IMR-90 (cell line): ENCODE measurements at regions of chr9 and their contacts with region 1.

Region 1: DNA sequence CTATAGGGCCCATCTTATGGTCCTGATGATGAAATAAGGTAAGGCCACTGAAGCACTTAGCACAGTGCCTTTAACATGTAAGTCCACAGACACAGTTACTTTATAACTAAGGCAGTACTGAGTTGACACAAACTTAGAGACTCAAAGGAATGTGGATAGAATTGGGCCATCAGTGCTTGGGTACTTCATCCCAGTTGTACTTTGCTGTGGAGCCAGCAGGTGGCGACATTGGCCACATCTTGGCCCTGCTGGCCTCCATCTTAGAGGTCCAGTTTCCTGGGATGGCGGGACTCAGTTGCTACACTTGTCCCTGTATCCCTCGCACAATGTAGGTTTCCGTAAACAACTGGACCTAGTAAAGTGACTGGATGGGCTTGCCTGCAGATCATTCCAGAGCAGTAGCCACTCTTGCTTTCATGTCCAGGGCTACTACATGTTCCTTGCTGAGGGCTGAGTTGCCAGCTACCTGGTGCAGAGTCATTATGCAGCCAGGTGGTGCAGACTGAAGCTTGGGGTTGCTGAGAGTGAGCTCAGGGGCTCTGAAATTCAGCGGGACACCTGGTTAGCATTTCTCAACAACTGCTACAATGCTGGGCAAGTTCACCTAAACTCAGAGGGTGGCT is 10.6 kb downstream of the MTAP start:
- DNase-seq: peak; percentile 74
- ATAC-seq: peak; percentile 87
- H3K4me3 ChIP-seq: no peak overlapping the region
- H3K27ac ChIP-seq: no peak overlapping the region
- H3K4me1 ChIP-seq: 0 out of 2 replicates have a peak, but pooled peaks cover 4% of the 10 kb centered on the region
- H3K27me3 ChIP-seq: no peaks in the 10 kb centered on the region
- CTCF ChIP-seq: peak; percentile 92
- POLR2A ChIP-seq: 0 out of 2 replicates have a peak, but pooled peaks have one; percentile 20
- RAD21 ChIP-seq: peak; percentile 96

Region 2: DNA sequence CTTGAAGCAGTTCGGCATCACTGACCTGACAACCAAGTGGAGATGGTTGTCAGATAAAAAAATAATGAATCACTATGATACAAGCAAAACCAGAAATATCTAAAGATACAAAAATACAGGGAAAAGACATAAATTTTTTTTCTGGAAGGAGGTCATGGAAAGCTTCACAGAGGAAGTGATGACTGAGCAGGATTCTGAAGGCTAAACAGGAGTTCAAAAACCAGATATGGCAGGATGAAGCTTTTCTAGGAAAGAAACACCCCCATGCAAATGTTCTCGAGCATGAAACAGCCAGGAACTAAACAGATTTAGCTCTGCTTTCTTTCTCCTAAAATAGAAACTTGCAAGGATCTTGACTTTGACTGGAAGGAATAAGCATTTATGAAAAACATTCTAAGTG is 270.3 kb before region 1 on chr9:
- CTCF ChIA-PET with region 1: no interaction called
- POLR2A ChIA-PET with region 1: no interaction called
- dilution Hi-C with region 1: no loop called
- in situ Hi-C with region 1: no loop called
- intact Hi-C with region 1: no loop called
- DNase-seq: no peak
- ATAC-seq: no peak
- H3K4me3 ChIP-seq: no peak overlapping the region
- H3K27ac ChIP-seq: no peak overlapping the region
- H3K4me1 ChIP-seq: peaks cover 4% of the 10 kb centered on the region; the same call in 1 of the 2 replicates
- H3K27me3 ChIP-seq: no peaks in the 10 kb centered on the region
- CTCF ChIP-seq: no peak
- POLR2A ChIP-seq: no peak
- RAD21 ChIP-seq: no peak

Region 3: DNA sequence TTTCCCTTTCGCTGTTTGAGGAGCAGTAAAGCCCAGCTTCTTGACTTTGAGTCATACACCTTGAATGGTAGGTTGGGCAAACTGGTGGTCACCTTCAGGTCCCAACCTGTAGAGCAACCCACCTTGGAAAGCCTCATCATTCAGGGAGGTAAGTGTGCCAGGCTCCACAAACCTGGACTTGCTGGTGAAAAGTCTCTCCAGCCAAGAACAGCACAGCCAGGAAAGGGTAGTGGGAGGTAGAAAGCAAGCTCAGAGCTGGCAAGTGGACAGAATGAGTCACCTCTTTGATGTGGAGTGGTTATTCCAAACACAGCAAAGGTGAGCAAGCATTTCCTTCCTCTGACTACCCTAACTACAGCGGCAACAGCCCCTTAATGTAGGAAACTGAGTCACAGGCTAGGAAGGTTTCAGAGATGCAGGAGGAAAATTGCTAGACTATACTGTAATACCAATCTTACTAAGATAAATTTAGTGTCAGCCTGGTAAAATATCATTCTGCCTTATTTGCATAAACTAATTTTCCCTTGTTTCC is 128.2 kb before region 1 on chr9:
- CTCF ChIA-PET with region 1: no interaction called
- POLR2A ChIA-PET with region 1: no interaction called
- dilution Hi-C with region 1: no loop called
- in situ Hi-C with region 1: no loop called
- intact Hi-C with region 1: no loop called
- DNase-seq: peak; percentile 87
- ATAC-seq: 0 out of 2 replicates have a peak, but pooled peaks have one; percentile 6
- H3K4me3 ChIP-seq: no peak overlapping the region
- H3K27ac ChIP-seq: no peak overlapping the region; the same call in 1 of the 2 replicates
- H3K4me1 ChIP-seq: peaks cover 33% of the 10 kb centered on the region
- H3K27me3 ChIP-seq: no peaks in the 10 kb centered on the region
- CTCF ChIP-seq: no peak
- POLR2A ChIP-seq: no peak
- RAD21 ChIP-seq: no peak

Region 4: GRCh38 chr9:21873540-21874221 is 60.6 kb after region 1 on chr9:
- CTCF ChIA-PET with region 1: no interaction called
- POLR2A ChIA-PET with region 1: no interaction called
- dilution Hi-C with region 1: no loop called
- in situ Hi-C with region 1: no loop called
- intact Hi-C with region 1: no loop called
- DNase-seq: peak; percentile 49
- ATAC-seq: no peak
- H3K4me3 ChIP-seq: no peak overlapping the region
- H3K27ac ChIP-seq: no peak overlapping the region
- H3K4me1 ChIP-seq: no peaks in the 10 kb centered on the region
- H3K27me3 ChIP-seq: no peaks in the 10 kb centered on the region
- CTCF ChIP-seq: no peak
- POLR2A ChIP-seq: no peak
- RAD21 ChIP-seq: no peak

Region 5: GRCh38 chr9:21995177-21996086 is 182.4 kb after region 1 on chr9:
- CTCF ChIA-PET with region 1: interaction called, 3 read pairs
- POLR2A ChIA-PET with region 1: no interaction called
- dilution Hi-C with region 1: no loop called
- in situ Hi-C with region 1: no loop called
- intact Hi-C with region 1: loop called (anchors 1 kb)
- DNase-seq: peak; percentile 69
- ATAC-seq: peak; percentile 71
- H3K4me3 ChIP-seq: peak overlapping the region; percentile 77
- H3K27ac ChIP-seq: peak overlapping the region; percentile 90
- H3K4me1 ChIP-seq: peaks cover 7% of the 10 kb centered on the region
- H3K27me3 ChIP-seq: no peaks in the 10 kb centered on the region
- CTCF ChIP-seq: 0 out of 2 replicates have a peak, but pooled peaks have one; percentile 19
- POLR2A ChIP-seq: no peak; the same call in none of the 2 replicates
- RAD21 ChIP-seq: no peak

Region 6: GRCh38 chr9:22037954-22038690 is 225.1 kb after region 1 on chr9:
- CTCF ChIA-PET with region 1: interaction called, 12 read pairs
- POLR2A ChIA-PET with region 1: no interaction called
- dilution Hi-C with region 1: no loop called
- in situ Hi-C with region 1: no loop called
- intact Hi-C with region 1: loop called (anchors 2 kb)
- DNase-seq: peak; percentile 47
- ATAC-seq: peak; percentile 36; the same call in 1 of the 2 replicates
- H3K4me3 ChIP-seq: no peak overlapping the region
- H3K27ac ChIP-seq: no peak overlapping the region
- H3K4me1 ChIP-seq: peaks cover 4% of the 10 kb centered on the region
- H3K27me3 ChIP-seq: no peaks in the 10 kb centered on the region
- CTCF ChIP-seq: peak; percentile 55
- POLR2A ChIP-seq: no peak
- RAD21 ChIP-seq: peak; percentile 67

Region 7: GRCh38 chr9:22141906-22142305 is 328.8 kb after region 1 on chr9:
- CTCF ChIA-PET with region 1: no interaction called
- POLR2A ChIA-PET with region 1: no interaction called
- dilution Hi-C with region 1: no loop called
- in situ Hi-C with region 1: no loop called
- intact Hi-C with region 1: no loop called
- DNase-seq: peak; percentile 18
- ATAC-seq: no peak
- H3K4me3 ChIP-seq: no peak overlapping the region
- H3K27ac ChIP-seq: no peak overlapping the region
- H3K4me1 ChIP-seq: 0 out of 2 replicates have a peak, but pooled peaks cover 1% of the 10 kb centered on the region
- H3K27me3 ChIP-seq: no peaks in the 10 kb centered on the region
- CTCF ChIP-seq: no peak
- POLR2A ChIP-seq: no peak
- RAD21 ChIP-seq: no peak

Region 8: DNA sequence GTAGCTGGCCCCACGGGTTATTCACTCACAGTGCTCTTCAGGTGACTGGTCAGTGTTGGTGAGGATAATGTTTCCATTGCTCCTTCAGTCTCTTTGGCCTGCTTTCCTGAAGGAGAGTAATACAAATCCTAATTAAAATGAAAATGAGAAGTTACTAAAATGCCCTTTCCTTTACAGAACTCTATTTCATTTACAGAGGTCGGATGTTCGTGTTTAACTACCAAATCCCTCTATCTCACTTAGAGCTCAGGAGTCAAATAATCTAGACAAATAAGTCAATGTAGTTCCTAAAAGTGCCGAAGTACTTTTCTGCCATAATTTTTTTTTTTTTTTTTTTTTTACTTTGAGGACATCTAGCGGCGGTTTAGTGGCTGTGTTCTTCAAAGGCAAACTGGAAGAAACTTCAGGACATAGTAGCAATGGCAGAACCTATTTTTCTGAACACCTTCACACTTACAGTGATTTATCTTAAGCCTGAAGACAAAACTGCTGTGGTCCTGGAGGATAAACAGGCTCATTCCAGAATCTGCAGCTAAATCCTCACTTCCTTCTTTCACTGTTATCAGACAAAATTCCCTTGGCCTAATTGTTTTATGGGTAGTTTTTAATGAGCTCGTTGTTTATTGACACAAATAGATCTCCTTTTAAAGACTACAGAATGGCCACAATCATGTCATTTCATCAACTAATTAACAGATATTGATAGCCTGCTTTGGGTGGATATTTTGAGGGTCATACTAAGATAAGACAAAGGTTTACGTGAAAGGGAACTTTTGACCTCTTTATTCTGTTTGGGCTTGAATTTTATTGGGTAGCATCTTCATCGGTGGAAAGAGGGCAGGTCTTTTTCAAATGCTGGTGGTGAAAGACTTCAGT is 426.0 kb after region 1 on chr9:
- CTCF ChIA-PET with region 1: interaction called, 9 read pairs
- POLR2A ChIA-PET with region 1: interaction called, 9 read pairs
- dilution Hi-C with region 1: no loop called
- in situ Hi-C with region 1: no loop called
- intact Hi-C with region 1: loop called (anchors 1 kb)
- DNase-seq: peak; percentile 63
- ATAC-seq: peak; percentile 40
- H3K4me3 ChIP-seq: no peak overlapping the region
- H3K27ac ChIP-seq: peak overlapping the region; percentile 7; the same call in 1 of the 2 replicates
- H3K4me1 ChIP-seq: peaks cover 8% of the 10 kb centered on the region
- H3K27me3 ChIP-seq: no peaks in the 10 kb centered on the region
- CTCF ChIP-seq: peak; percentile 62
- POLR2A ChIP-seq: no peak
- RAD21 ChIP-seq: peak; percentile 51

Region 9: DNA sequence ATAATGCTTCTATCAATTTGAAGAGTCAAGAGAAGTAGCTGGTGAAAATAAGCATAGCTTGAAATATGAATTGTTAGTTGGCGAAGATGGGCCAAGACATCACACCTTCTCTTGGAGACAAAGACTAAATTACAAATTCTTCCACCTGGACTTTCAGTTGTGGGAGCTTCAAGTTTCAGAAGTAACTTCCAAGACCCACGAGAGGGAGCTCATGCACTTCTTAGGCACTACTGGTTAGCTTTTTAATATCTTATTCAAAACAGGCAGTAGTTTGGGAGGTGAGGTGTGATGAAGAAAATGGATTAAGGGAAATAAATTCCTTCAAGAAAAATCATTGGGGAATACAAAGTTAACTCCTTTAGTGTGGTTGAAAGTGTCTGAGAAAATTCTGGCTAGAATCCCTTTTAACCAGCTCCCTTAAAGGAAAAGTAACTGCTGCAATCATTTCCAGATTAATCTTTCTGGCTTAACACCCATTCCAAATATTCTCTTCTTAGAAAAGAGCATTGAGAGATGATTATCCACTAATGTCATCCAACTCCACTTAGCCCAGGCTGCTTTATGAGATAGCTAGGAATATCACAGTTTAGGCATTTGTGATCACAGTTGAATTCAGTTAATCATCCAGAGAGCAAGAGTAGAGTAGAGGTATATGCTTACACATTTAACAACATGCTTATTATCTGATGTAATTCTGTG is 494.1 kb after region 1 on chr9:
- CTCF ChIA-PET with region 1: interaction called, 4 read pairs
- POLR2A ChIA-PET with region 1: no interaction called
- dilution Hi-C with region 1: no loop called
- in situ Hi-C with region 1: no loop called
- intact Hi-C with region 1: loop called (anchors 5 kb)
- DNase-seq: peak; percentile 55
- ATAC-seq: 0 out of 2 replicates have a peak, but pooled peaks have one; percentile 46
- H3K4me3 ChIP-seq: no peak overlapping the region
- H3K27ac ChIP-seq: no peak overlapping the region
- H3K4me1 ChIP-seq: no peaks in the 10 kb centered on the region
- H3K27me3 ChIP-seq: no peaks in the 10 kb centered on the region; the same call in 1 of the 2 replicates
- CTCF ChIP-seq: peak; percentile 69
- POLR2A ChIP-seq: no peak
- RAD21 ChIP-seq: peak; percentile 70

Region 10: GRCh38 chr9:22452415-22453010 is 639.5 kb after region 1 on chr9:
- CTCF ChIA-PET with region 1: interaction called, 4 read pairs
- POLR2A ChIA-PET with region 1: no interaction called
- dilution Hi-C with region 1: no loop called
- in situ Hi-C with region 1: loop called (anchors 5 kb)
- intact Hi-C with region 1: loop called (anchors 1 kb)
- DNase-seq: peak; percentile 31
- ATAC-seq: peak; percentile 83
- H3K4me3 ChIP-seq: no peak overlapping the region
- H3K27ac ChIP-seq: no peak overlapping the region
- H3K4me1 ChIP-seq: no peaks in the 10 kb centered on the region
- H3K27me3 ChIP-seq: peaks cover 9% of the 10 kb centered on the region
- CTCF ChIP-seq: peak; percentile 79
- POLR2A ChIP-seq: no peak
- RAD21 ChIP-seq: peak; percentile 64